ENCODE measurements at regions of chr6 and their contacts with region 1.

Region 1: DNA sequence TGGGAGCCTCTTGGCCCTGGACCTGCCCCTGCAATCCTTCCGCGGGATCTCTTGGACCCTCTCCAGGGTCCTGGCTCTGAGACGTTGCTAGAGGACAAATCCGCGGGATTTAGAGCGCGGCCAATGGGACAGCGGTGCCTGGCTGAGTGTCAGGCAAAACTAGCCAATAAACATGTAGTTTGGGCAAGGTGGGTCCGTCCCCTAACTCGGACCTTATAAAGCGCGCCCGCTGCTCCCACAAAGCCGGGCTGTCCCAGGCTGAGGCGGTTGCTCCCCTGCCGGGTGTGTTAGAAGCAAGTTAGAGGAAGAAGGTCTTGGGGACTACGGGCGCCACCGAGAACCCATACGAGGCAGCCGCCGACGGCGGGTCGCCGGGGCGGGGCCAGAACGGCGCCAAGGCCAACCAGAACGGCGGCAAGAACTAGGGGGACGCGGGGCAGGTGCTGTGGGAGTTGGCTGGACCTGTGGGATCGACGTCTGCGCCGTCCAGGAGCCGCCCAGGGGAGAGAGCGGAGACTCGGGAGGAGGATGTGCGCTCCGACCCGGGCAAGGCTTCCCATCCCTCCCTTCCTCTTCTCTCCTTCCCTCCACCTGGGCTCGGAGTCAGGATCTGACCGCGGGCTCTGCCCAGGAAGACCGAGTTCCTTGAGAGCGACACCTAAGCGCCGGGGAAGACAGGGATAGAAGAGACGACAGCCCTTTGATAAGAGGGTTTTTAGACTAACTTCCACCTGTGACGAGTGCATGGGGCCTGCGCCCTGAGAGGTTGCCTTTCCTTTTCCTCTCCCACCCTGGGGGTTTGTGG is 6.5 kb upstream of the TMEM14A start:
- DNase-seq: peak; percentile 90 to 98 (median 94)
- ATAC-seq: peak; percentile 98
- H3K4me3 ChIP-seq: peak overlapping the region; percentile 63
- H3K27ac ChIP-seq: peak overlapping the region; percentile 59
- H3K4me1 ChIP-seq: peaks cover 7 to 13% of the 10 kb centered on the region in 2 experiments; a peak in 4 of 5 replicates
- H3K27me3 ChIP-seq: no peaks in the 10 kb centered on the region
- CTCF ChIP-seq: no peak
- EP300 ChIP-seq: no peak
- POLR2A ChIP-seq: peak; percentile 94
- RAD21 ChIP-seq: no peak

Region 2: GRCh38 chr6:52162940-52163908 is 501.2 kb before region 1 on chr6:
- CTCF ChIA-PET with region 1: interaction called, 5 read pairs
- POLR2A ChIA-PET with region 1: interaction called, 3 read pairs
- in situ Hi-C with region 1: no loop called
- intact Hi-C with region 1: loop called (anchors 10 kb)
- DNase-seq: peak in 1 of 4 experiments; percentile 24
- ATAC-seq: peak; percentile 82
- H3K4me3 ChIP-seq: no peak overlapping the region
- H3K27ac ChIP-seq: no peak overlapping the region
- H3K4me1 ChIP-seq: no peaks in the 10 kb centered on the region; a peak in 1 of 5 replicates
- H3K27me3 ChIP-seq: no peaks in the 10 kb centered on the region
- CTCF ChIP-seq: peak; percentile 25 to 79 (median 52); a peak in 4 of 6 replicates
- EP300 ChIP-seq: no peak
- POLR2A ChIP-seq: no peak
- RAD21 ChIP-seq: peak; percentile 83 to 86

Region 3: DNA sequence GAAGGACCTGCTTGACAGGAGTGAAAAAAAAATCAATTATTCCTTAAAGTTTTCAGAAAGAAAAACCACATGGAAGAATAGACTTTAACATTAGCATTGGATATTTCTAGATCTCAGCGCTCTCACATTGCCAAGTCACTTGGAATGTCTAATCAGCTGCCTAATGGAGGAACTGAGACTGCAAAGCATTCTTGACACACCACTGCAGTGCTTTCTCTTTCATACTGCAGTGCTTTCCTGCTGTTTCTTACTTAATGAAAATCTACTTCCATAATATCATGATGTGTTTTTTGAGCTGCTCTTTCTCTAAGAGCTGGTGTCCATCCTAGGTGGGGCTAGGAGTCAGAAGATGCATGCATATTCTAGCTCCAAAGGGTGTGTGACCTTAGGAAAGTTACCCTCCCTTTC is 359.4 kb before region 1 on chr6:
- CTCF ChIA-PET with region 1: no interaction called
- POLR2A ChIA-PET with region 1: no interaction called
- in situ Hi-C with region 1: loop called (anchors 10 kb)
- intact Hi-C with region 1: no loop called
- DNase-seq: peak in 1 of 4 experiments; percentile 37
- ATAC-seq: peak; percentile 30
- H3K4me3 ChIP-seq: no peak overlapping the region
- H3K27ac ChIP-seq: peak overlapping the region; percentile 55; the same call in 1 of the 3 replicates
- H3K4me1 ChIP-seq: peaks cover 42 to 47% of the 10 kb centered on the region in 2 experiments
- H3K27me3 ChIP-seq: no peaks in the 10 kb centered on the region
- CTCF ChIP-seq: no peak
- EP300 ChIP-seq: no peak
- POLR2A ChIP-seq: no peak
- RAD21 ChIP-seq: no peak

Region 4: GRCh38 chr6:52503848-52504781 is 160.3 kb before region 1 on chr6:
- CTCF ChIA-PET with region 1: no interaction called
- POLR2A ChIA-PET with region 1: no interaction called
- in situ Hi-C with region 1: no loop called
- intact Hi-C with region 1: loop called (anchors 5 kb)
- DNase-seq: peak; percentile 90 to 92 (median 90)
- ATAC-seq: peak; percentile 95
- H3K4me3 ChIP-seq: no peak overlapping the region
- H3K27ac ChIP-seq: peak overlapping the region; percentile 73
- H3K4me1 ChIP-seq: peaks cover 33 to 49% of the 10 kb centered on the region in 2 experiments
- H3K27me3 ChIP-seq: no peaks in the 10 kb centered on the region
- CTCF ChIP-seq: no peak; a peak in 1 of 6 replicates
- EP300 ChIP-seq: peak; percentile 68; the same call in 1 of the 2 replicates
- POLR2A ChIP-seq: no peak; the same call in 1 of the 2 replicates
- RAD21 ChIP-seq: no peak; a peak in 1 of 4 replicates

Region 5: GRCh38 chr6:52557389-52558265 is 106.8 kb before region 1 on chr6:
- CTCF ChIA-PET with region 1: no interaction called
- POLR2A ChIA-PET with region 1: no interaction called
- in situ Hi-C with region 1: no loop called
- intact Hi-C with region 1: no loop called
- DNase-seq: no peak
- ATAC-seq: no peak
- H3K4me3 ChIP-seq: no peak overlapping the region
- H3K27ac ChIP-seq: no peak overlapping the region
- H3K4me1 ChIP-seq: peaks cover 9 to 21% of the 10 kb centered on the region in 2 experiments
- H3K27me3 ChIP-seq: no peaks in the 10 kb centered on the region
- CTCF ChIP-seq: no peak
- EP300 ChIP-seq: no peak
- POLR2A ChIP-seq: no peak
- RAD21 ChIP-seq: 0 out of 4 replicates have a peak, but pooled peaks of 1 of the 2 experiments have one; percentile 6

Region 6: GRCh38 chr6:52598123-52598823 is 66.1 kb before region 1 on chr6:
- CTCF ChIA-PET with region 1: interaction called, 9 read pairs
- POLR2A ChIA-PET with region 1: interaction called, 3 read pairs
- in situ Hi-C with region 1: no loop called
- intact Hi-C with region 1: loop called (anchors 5 kb)
- DNase-seq: peak; percentile 87 to 89 (median 89)
- ATAC-seq: peak; percentile 96
- H3K4me3 ChIP-seq: peak overlapping the region; percentile 3; the same call in 1 of the 2 replicates
- H3K27ac ChIP-seq: peak overlapping the region; percentile 29; the same call in 1 of the 3 replicates
- H3K4me1 ChIP-seq: peaks cover 0 to 17% of the 10 kb centered on the region in 2 experiments; a peak in 3 of 5 replicates
- H3K27me3 ChIP-seq: no peaks in the 10 kb centered on the region
- CTCF ChIP-seq: peak; percentile 93 to 98 (median 93)
- EP300 ChIP-seq: peak; percentile 35; the same call in 1 of the 2 replicates
- POLR2A ChIP-seq: peak; percentile 55; the same call in 1 of the 2 replicates
- RAD21 ChIP-seq: peak; percentile 68 to 79

Measured in K562 (cell line).